Right lobe of liver (tissue), 6 donors: ENCODE measurements at regions of chr7 and their contacts with region 1.

Region 1: DNA sequence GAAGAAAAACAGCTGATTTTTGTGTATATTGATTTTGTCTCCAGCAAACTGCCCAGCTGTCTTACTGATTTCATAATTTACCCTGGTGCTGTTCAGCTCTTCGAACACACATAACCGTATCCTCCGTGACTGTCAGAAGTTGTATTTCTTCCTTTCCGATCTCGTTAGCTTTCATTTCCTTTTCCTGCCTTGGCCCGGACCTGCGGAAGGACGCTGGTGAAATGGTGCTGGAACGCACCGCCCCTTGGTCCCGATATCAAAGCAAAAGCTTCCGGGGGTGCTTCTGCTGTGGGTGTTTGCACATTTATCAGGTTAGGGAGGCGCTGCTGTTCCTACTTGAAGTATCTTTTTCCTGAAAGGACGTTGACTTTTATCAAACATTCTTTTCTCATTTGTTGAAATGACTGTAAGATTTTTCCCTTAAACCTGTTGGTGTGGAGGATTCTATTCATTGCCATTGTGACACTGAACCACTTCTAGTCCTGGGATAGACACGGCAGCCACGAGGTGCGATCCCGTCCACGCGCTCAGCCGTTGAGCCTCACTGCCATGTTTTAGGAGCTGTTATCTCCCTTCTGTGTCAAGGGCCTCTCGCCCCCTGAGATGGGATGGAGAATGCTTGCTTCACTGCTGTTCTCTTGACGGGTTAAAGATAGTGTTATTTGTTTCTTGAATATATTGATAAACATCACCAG is 72.6 kb downstream of the FOXL3 start:
- DNase-seq: peak in 2 of 3 donors; percentile 42 to 44
- ATAC-seq: peak; percentile 55 to 77 (median 68)
- H3K4me3 ChIP-seq: no peak overlapping the region
- H3K27ac ChIP-seq: no peak overlapping the region
- H3K4me1 ChIP-seq: peaks cover 0 to 3% (median 0%) of the 10 kb centered on the region in 4 donors
- H3K27me3 ChIP-seq: no peaks in the 10 kb centered on the region
- CTCF ChIP-seq: no peak
- POLR2A ChIP-seq: no peak

Region 2: DNA sequence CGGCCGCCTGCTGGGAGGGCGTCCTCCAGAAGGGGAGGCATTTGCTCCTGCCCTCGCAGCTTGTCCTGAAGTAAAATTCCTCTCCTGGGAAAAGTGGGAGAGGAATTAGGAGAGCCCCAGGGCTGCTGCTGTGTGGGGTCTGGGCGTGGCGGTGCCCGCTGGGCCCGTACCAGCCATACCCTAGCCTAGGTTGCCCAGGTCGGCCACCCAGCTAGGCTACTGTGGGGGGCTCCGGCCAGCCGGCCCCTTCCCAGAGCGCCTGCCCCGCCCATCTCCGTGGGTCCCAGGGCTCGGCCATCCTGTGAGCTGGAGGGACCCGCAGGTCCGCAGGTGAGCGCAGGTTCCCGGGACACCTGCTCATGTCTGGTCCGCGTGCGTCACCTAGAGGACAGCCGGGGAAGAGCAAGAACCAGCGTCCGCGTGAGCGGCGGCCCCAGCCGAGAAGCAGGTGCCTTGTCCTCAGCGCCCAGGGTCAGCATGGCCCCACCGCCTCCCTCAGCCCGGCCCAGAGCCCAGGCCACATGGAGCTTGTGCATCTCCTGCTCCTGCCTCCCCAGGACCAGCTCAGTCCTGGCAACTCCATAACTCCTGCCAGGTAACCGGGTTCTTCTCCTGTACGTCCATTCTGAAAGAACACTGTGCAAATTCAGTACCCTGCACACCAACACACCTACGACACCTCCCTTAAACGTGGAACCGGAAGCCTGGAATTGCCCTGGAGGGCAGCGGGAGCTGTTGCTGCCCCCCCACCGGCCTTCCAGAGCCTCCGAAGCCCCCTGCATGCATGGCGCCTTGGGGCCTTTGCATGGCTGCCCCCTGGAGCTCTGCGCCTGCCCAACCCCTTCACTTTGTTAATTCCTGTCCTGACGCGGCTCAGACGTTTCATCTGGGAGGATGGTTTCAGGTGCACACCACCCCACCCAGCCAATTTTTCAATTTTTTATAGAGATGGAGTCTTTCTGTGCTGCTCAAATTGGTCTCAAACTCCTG is 95.4 kb before region 1 on chr7:
- intact Hi-C with region 1: no loop called
- DNase-seq: peak in 1 of 3 donors; percentile 56
- ATAC-seq: peak; percentile 16 to 50 (median 22)
- H3K4me3 ChIP-seq: no peak overlapping the region
- H3K27ac ChIP-seq: no peak overlapping the region
- H3K4me1 ChIP-seq: no peaks in the 10 kb centered on the region
- H3K27me3 ChIP-seq: no peaks in the 10 kb centered on the region
- CTCF ChIP-seq: peak in 3 of 4 donors; percentile 32 to 52 (median 34)
- POLR2A ChIP-seq: no peak

Region 3: DNA sequence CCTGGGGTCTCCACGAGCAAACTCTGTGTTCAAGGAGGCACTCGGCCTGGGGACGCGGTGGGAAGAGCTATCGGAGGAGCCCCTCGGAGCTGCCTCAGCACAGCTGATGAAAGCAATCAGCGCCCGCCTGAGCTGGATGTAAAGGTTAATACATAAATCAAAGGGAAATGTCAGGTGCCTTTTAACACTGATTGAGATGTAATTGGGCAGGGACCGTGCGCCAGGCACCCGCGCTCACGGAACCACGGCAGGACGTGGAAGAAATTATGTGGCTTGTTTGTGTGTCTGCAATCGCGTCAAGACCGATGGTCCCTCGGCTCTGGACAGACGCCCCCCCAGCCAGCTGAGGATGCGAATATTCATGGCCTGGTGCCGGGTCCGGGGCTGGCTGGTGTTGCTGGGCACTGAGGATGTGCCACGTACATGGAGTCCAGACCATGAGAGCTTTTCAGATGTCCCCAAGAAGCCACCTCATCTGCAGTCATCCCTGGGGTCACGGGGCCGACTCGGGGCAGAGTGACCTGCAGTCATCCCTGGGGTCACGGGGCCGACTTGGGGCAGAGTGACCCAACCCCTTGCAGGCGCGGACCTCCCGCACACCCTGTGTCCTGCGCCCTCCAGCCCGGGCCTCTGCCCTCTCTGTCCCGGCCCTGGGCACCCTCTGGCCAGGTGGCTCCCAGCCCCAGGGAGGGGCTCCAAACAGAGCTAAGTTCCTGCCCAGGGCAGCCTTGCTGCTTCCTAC is 57.0 kb before region 1 on chr7:
- intact Hi-C with region 1: loop called in 1 of 2 experiments (anchors 10 kb)
- DNase-seq: peak in 1 of 3 donors; percentile 31
- ATAC-seq: peak in 1 of 4 donors; percentile 27
- H3K4me3 ChIP-seq: no peak overlapping the region
- H3K27ac ChIP-seq: no peak overlapping the region
- H3K4me1 ChIP-seq: no peaks in the 10 kb centered on the region
- H3K27me3 ChIP-seq: no peaks in the 10 kb centered on the region
- CTCF ChIP-seq: no peak
- POLR2A ChIP-seq: no peak